Head of caudate nucleus (tissue), 42 donors: ENCODE measurements at regions of chr20 and their contacts with region 1.

Region 1: DNA sequence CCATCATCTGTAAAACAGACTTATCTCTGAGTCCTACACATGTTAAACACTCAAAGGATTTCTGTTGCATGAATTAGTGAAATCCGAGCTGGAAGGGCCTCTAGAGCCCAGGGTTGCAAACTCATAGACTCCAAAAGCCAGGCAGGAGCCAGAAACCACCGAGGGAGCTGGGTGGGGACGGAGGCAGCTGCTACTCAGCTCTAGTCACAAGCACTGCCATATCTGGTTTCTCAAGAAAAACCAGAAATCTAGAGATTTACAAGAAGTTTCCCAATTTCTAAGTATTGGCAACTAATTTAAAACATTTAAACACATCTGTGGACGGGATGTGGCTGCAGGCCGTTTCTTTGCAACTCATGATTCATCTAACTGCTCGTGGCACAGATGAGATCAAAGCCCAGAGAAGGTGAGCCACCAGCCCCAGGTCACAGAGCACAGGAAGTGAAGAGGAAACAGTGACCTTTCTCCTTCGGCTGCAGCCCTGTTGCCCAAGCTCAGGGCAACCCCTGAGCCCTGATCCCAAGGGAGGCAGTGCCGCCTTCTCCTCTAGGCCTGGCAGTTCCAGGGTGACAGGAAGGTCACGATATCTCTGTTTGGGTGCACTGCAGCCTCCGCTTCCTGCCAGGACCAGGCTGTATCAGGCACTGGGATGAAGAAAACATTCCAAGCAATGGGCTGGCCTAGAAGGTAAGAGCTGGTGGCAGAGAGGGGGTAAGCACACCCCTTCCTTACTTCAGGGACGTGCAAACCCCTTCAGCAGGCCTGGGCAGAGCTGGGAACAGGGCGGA is 26.4 kb upstream of the PTGIS start:
- DNase-seq: no peak

Region 2: GRCh38 chr20:49541733-49542513 is 52.4 kb before region 1 on chr20:
- intact Hi-C with region 1: loop called (anchors 10 kb)
- DNase-seq: peak in 41 of 42 donors; percentile 13 to 78 (median 51)